ENCODE measurements at regions of chr11 and their contacts with region 1.

Region 1: DNA sequence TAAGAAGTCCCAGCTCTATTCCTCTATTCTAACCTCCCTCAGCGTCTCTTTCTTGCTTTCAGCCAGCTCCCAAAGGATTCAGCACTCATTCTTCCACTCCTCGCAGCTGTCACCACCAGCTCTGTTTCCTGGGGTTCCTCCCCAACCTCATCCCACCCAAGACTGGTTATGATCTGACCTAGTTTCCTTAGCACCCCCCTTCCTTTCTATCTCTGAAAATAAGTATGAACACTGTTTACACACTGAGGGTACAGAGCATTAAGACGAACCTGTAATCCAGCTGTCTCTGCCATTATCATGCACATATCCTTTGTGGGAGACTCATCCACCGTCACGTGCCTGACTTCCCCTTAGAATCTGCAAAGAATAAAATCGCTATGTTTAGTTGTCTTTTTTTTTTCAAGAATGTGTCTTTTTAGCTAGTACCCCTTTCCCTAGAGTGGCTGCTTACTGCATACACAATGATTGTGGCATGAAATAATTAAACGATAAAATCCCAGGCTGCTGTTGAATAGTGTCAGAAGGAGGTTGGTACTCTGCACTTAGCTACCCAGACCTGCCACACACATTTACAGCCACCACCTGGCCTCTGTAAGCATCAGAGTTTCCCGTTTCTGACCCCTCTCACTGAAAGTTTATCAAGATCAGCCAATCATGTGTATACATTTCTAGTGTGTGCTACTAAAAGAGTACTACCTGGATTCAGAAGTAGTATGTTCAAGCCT is 26.9 kb upstream of the CSTF3 start:
- DNase-seq: peak; percentile 62 to 75 (median 67)
- H3K4me3 ChIP-seq: peak overlapping the region in 1 of 3 experiments; percentile 36
- H3K4me3 Mint-ChIP-seq: peak overlapping the region; percentile 48 to 87
- H3K27ac ChIP-seq: peak overlapping the region; percentile 3 to 5
- H3K27ac Mint-ChIP-seq: peak overlapping the region; percentile 46 to 84 (median 69)
- H3K4me1 ChIP-seq: peaks cover 19 to 20% of the 10 kb centered on the region in 2 donors
- H3K4me1 Mint-ChIP-seq: peaks cover 18% of the 10 kb centered on the region
- H3K27me3 ChIP-seq: no peaks in the 10 kb centered on the region
- H3K27me3 Mint-ChIP-seq: peaks cover 0 to 3% (median 0%) of the 10 kb centered on the region in 3 donors
- CTCF ChIP-seq: no peak

Region 2: GRCh38 chr11:33063326-33063881 is 124.8 kb before region 1 on chr11:
- intact Hi-C with region 1: no loop called
- DNase-seq: peak; percentile 52 to 82 (median 65)
- H3K4me3 ChIP-seq: peak overlapping the region in 1 of 3 experiments; percentile 45
- H3K4me3 Mint-ChIP-seq: peak overlapping the region in 1 of 2 donors; percentile 72
- H3K27ac ChIP-seq: peak overlapping the region in 1 of 2 donors; percentile 76
- H3K27ac Mint-ChIP-seq: peak overlapping the region; percentile 82 to 95 (median 93)
- H3K4me1 ChIP-seq: peaks cover 32 to 34% of the 10 kb centered on the region in 2 donors
- H3K4me1 Mint-ChIP-seq: peaks cover 38% of the 10 kb centered on the region
- H3K27me3 ChIP-seq: no peaks in the 10 kb centered on the region
- H3K27me3 Mint-ChIP-seq: peaks cover 0 to 2% (median 1%) of the 10 kb centered on the region in 3 donors
- CTCF ChIP-seq: no peak

Region 3: DNA sequence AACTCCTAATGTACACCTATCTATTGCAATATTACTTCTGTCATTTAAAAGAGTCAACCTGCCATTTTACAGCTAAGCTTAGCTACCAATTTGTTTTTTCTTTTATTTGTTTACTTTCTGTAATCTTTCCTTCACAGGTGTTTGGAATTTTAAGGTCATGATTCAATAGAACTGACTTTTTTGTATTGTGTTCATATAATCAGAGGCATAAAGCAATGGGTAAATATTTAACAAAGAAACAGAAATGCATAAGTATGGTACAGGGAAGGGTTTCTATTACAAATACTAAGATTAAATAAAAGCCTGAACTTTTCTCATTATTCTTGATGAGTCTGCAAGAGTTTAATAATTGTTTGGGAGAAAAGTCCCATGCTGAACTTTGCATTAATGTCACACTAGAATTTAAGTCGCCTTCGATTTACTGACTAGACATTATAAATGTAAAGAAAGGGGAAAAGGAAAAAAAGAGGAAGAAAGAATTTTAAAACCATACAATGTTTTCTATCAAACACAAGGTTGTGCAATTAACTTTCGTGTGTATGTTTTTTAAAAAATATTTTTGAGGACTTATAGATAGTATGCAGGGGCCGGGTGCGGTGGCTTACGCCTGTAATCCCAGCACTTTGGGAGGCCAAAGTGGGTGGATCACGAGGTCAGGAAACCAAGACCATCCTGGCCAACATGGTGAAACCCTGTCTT is 34.0 kb after region 1 on chr11:
- intact Hi-C with region 1: loop called in 1 of 2 experiments (anchors 5 kb)
- DNase-seq: peak in 2 of 3 donors; percentile 34 to 72
- H3K4me3 ChIP-seq: peak overlapping the region; percentile 2 to 59 (median 16)
- H3K4me3 Mint-ChIP-seq: peak overlapping the region; percentile 27 to 62
- H3K27ac ChIP-seq: peak overlapping the region; percentile 66 to 80
- H3K27ac Mint-ChIP-seq: peak overlapping the region; percentile 72 to 91 (median 86)
- H3K4me1 ChIP-seq: peaks cover 28 to 32% of the 10 kb centered on the region in 2 donors
- H3K4me1 Mint-ChIP-seq: peaks cover 37% of the 10 kb centered on the region
- H3K27me3 ChIP-seq: no peaks in the 10 kb centered on the region
- H3K27me3 Mint-ChIP-seq: peaks cover 0 to 2% (median 1%) of the 10 kb centered on the region in 3 donors
- CTCF ChIP-seq: no peak

Measured in CD14-positive monocyte (primary cell).